Activated T-helper 2 cell treated with anti-CD3 and anti-CD28 coated beads, Interferon-gamma antibody, Interleukin-2, Interleukin-4, amounts not matched to agents 10 μg/mL and 5 μg/mL and 100 μg/mL, durations not matched to agents 14 hours and 24 hours and 36 hours (primary cell): ENCODE measurements at regions of chr2 and their contacts with region 1.

Region 1: GRCh38 chr2:96265840-96266679 is at the starts of genes CIAO1 and TMEM127:
- DNase-seq: peak; percentile 99
- H3K4me3 Mint-ChIP-seq: peak within 1 kb of the TSS; percentile 100
- H3K27ac Mint-ChIP-seq: peak within 1 kb of the TSS; percentile 98
- H3K4me1 Mint-ChIP-seq: peaks cover 32% of the 10 kb centered on the region
- H3K27me3 Mint-ChIP-seq: no peaks in the 10 kb centered on the region
- total RNA-seq, gene CIAO1: 93.9 and 94.7 TPM in 2 replicates
- total RNA-seq, gene TMEM127: 29.0 and 30.4 TPM in 2 replicates

Region 2: DNA sequence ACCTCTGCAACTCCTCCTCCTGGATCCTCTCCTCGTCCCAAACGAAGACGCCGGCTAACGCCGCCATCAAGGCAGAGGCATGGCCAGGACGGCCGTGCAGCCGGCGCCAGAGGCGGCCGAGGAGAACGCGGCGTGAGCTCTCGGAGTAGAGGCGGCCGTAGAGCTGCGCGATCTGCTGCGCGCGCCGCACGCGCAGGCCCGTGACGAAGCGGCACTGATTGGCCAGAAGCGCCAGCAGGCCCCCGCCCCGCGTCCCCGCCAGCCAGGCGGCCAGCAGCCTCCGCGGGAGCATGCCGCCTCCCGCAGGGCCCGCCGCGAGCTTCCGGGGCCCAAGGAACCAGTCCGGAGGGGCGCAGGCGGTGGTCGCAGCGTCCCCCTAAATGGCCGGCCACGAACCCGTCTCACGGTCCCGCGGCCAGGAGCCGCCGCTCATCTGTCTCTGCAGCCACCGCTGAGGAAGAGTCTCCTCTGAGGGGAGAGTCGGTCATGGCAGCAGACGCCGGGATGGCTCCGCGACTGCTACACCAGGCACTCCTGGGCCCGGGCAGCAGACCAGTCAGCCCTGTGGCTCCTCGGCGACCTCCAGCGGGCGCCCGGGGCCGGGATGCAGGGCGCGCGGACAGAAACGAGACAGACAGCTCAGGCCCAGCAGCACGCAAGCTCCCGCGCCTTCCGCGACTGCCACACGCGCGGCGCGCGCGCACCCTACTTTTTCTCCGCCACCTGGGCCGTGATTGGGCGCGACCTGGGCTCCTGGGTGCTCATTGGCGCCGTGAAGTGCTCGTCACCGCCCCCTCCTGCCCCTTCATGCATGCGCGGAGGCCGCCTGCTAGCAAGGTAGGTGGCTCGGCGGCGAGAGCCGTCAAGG is 57.7 kb before region 1 on chr2 and contains the start of gene STARD7:
- intact Hi-C with region 1: loop called (anchors 1 kb)
- DNase-seq: peak; percentile 98
- H3K4me3 Mint-ChIP-seq: peak within 1 kb of the TSS; percentile 97
- H3K27ac Mint-ChIP-seq: peak within 1 kb of the TSS; percentile 87
- H3K4me1 Mint-ChIP-seq: peaks cover 45% of the 10 kb centered on the region
- H3K27me3 Mint-ChIP-seq: no peaks in the 10 kb centered on the region
- total RNA-seq, gene STARD7: 201 and 206 TPM in 2 replicates

Region 3: DNA sequence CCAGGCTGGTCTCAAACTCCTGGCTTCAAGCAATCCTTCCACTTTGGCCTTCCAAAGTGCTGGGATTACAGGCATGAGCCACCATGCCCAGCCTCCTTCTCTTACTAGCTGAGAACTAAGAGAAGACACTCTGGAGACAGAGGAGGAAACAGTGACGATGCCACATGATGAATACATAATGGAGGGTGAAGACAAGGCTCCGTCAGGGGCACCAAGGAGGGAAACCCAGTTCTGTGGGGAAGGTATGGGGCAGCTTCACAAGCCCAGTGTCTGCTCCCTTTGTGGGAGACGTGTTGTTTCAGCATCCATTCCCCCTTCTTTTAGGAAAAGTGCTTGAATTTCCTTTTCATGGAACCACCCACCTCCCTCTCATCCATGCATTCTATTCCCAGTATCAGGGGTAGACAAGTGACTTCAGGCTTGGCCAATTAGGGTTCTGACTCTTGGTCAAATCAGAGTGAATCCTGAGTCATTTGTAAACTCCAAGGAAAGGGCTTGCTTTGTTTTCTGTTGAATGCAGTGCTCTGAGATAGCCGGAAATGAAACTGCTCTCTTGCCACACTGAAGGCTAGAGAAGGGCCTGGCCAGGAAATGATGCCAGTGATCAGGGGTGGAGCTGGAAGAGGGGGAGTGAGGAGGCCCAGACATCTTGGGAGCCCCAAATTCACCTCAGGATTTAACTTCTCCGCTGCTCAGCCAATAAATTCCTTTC is 24.0 kb before region 1 on chr2:
- intact Hi-C with region 1: loop called (anchors 1 kb)
- DNase-seq: peak; percentile 57
- H3K4me3 Mint-ChIP-seq: peak overlapping the region; percentile 62
- H3K27ac Mint-ChIP-seq: peak overlapping the region; percentile 92
- H3K4me1 Mint-ChIP-seq: peaks cover 46% of the 10 kb centered on the region
- H3K27me3 Mint-ChIP-seq: no peaks in the 10 kb centered on the region

Region 4: GRCh38 chr2:96305091-96305978 is 39.3 kb after region 1 on chr2 and contains the start of gene SNRNP200:
- intact Hi-C with region 1: loop called (anchors 1 kb)
- DNase-seq: peak; percentile 88
- H3K4me3 Mint-ChIP-seq: peak within 1 kb of the TSS; percentile 95
- H3K27ac Mint-ChIP-seq: peak within 1 kb of the TSS; percentile 94
- H3K4me1 Mint-ChIP-seq: peaks cover 45% of the 10 kb centered on the region
- H3K27me3 Mint-ChIP-seq: no peaks in the 10 kb centered on the region
- total RNA-seq, gene SNRNP200: 191 TPM in 2 replicates

Region 5: DNA sequence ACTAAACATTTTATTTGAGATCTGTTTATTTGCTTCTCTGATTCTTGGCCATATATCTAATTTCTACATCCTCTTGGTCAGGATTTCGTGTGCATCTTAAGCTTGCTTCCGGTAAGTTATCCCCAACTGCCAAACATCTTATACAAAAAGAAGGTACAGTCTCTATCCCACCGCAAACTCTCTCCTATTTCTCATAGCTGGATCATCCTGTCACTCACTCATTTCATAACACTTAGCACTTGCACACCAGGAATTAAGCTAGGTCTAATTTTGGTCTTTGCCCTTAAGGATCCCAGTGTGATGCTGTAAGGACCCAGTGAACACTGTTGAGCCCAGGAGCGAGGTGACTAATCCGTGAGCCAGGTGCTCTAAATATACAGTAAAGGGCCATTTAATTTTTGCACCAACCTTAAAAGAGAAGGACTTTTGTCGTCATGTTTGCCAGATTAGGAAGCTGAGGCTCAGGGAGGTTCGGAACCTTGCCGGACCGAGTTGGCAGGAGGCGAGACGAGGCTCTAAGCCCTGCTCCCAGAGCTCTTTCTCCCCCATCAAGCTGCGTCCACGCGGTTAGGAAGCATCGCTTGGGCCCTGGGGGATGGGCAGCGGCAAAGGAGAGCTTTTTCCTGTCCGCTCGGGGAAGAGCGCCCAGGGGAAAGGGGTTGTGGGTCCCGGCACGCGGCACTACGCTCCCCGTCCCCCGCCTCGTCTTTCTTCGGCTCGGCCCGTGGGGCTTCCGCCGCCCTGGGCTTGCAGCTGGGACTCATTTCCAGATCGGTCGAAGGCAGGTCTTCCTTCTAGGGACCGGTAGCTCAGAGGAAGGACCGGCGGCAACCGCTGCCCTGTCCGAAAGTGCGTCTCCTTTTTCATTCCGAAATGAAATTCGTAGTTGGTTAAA is 54.9 kb after region 1 on chr2:
- intact Hi-C with region 1: loop called (anchors 2 kb)
- DNase-seq: no peak
- H3K4me3 Mint-ChIP-seq: peak overlapping the region; percentile 88
- H3K27ac Mint-ChIP-seq: peak overlapping the region; percentile 86
- H3K4me1 Mint-ChIP-seq: peaks cover 54% of the 10 kb centered on the region
- H3K27me3 Mint-ChIP-seq: no peaks in the 10 kb centered on the region

Region 6: DNA sequence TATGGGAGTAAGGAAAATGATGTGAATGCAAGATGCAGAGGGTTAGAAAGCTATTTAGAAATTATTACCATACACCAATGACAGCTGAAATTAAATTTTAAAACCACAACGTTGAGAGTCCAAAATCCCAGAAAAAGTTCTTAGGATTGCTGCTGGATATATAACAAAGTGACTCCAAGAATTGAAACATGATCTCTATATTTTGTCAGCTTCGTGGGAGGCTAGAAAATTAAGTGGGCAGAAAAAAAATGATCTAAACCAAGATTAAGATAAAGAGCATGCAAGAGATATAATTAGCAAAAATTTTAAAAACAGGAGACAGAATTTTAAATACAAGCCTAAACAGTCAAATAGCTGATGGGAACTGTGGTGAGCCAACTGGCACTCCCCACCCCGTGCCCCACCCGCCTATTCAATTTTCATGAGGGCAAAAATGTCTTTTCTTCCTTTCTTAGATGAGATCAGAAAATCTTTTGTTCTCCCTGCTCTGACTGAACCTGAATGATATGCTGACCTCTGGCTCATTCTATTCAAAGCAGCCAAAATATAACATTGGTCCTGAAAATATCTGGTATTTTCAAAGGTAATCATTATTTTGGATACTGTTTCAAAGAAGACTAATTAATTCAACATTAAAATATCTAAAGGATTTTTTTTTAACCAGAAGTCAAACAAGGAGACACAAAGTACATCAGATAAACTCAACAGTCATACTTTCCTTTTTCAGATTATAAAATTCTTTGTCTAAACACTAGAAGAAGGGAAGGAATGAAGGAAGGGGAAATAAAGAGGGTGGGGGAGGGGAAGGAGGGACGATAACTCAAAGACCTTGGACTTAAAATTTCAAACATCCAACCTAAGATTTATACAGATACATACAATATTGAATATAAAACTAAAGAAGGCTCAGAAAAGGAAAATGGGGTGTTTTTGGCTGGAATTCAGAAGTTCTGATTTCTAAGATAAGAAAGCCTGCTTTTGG is 359.8 kb after region 1 on chr2:
- intact Hi-C with region 1: no loop called
- DNase-seq: no peak
- H3K4me3 Mint-ChIP-seq: peak overlapping the region; percentile 4
- H3K27ac Mint-ChIP-seq: peak overlapping the region; percentile 8
- H3K4me1 Mint-ChIP-seq: peaks cover 27% of the 10 kb centered on the region
- H3K27me3 Mint-ChIP-seq: no peaks in the 10 kb centered on the region